Activated CD8-positive, alpha-beta T cell treated with anti-CD3 and anti-CD28 coated beads, Interleukin-2, amount 10 ng/mL, durations not matched to agents 7 days and 5 days (primary cell): ENCODE measurements at regions of chr6 and their contacts with region 1.

Region 1: GRCh38 chr6:107731422-107732319 is 92.4 kb downstream of the SCML4 start:
- DNase-seq: peak; percentile 56
- ATAC-seq: peak; percentile 37
- H3K4me3 Mint-ChIP-seq: peak overlapping the region; percentile 90
- H3K27ac Mint-ChIP-seq: peak overlapping the region; percentile 92
- H3K4me1 Mint-ChIP-seq: peaks cover 83% of the 10 kb centered on the region
- H3K27me3 Mint-ChIP-seq: no peaks in the 10 kb centered on the region

Region 2: DNA sequence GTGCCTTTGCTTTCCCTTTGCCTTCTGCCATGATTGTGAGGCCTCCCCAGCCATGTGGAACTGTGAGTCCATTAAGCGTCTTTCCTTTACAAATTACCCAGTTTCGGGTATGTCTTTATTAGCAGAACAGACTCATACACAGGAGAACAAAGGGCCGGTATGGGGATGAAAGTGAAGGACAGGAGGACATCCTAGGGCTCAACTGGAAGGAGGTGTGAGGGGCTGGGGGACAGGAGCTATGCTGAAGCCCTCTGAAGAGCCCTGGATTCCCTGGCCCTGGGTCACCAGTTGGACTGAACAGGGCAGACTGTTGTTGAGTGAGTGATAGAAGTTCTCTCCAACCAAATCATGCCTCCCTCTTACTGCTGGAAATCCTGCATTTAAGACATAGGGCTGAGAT is 13.3 kb before region 1 on chr6:
- CTCF ChIA-PET with region 1: interaction called, 10 read pairs
- POLR2A ChIA-PET with region 1: interaction called, 5 read pairs
- DNase-seq: no peak
- ATAC-seq: no peak
- H3K4me3 Mint-ChIP-seq: no peak overlapping the region
- H3K27ac Mint-ChIP-seq: no peak overlapping the region
- H3K4me1 Mint-ChIP-seq: peaks cover 63% of the 10 kb centered on the region
- H3K27me3 Mint-ChIP-seq: no peaks in the 10 kb centered on the region

Region 3: DNA sequence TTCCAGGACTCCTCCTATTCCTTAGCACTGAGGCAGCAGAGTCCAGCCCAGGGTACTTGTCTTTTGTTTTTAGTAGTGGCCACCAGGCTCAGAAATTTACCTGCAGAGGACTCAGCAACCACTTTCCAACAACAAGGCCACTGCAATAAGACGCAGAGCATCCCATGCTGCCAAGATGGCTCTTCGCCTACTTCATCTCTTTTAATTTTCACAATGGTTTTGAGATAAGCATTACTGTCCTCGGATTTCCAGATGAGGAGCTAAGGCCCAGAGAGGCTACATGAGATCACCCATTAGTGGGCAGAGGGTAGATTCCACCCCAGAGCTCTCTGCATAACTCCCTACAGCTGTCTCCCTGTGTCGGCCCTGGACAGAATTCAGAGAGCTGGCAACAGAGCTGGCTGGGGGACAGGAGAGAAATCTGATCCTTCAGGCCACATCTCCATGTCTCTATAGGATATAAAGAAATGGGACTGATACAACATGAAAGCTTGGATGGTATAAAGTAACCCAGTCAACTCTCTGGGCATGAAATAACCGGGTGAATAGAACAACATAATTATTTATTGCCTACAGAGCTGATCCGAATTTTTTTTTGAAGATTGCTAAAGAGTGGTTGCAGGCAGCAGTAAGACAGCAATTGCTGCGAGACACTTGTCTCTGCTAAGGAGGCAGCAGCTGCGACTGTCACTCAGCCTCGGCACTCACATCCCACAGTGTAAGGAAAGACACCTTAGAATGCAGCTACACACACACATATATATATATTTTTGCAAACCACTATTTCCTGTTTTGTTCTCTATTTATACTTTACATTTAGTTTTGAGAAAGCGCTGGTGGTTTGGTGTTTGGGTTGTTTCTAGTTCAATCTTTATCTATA is 55.3 kb after region 1 on chr6:
- CTCF ChIA-PET with region 1: interaction called, 18 read pairs
- POLR2A ChIA-PET with region 1: interaction called, 5 read pairs
- DNase-seq: peak; percentile 70
- ATAC-seq: peak; percentile 81
- H3K4me3 Mint-ChIP-seq: peak overlapping the region; percentile 69
- H3K27ac Mint-ChIP-seq: peak overlapping the region; percentile 91
- H3K4me1 Mint-ChIP-seq: peaks cover 67% of the 10 kb centered on the region
- H3K27me3 Mint-ChIP-seq: no peaks in the 10 kb centered on the region

Region 4: GRCh38 chr6:107866606-107867301 is 135.1 kb after region 1 on chr6:
- CTCF ChIA-PET with region 1: interaction called, 62 read pairs
- POLR2A ChIA-PET with region 1: no interaction called
- DNase-seq: peak; percentile 58
- ATAC-seq: peak; percentile 57
- H3K4me3 Mint-ChIP-seq: no peak overlapping the region
- H3K27ac Mint-ChIP-seq: no peak overlapping the region
- H3K4me1 Mint-ChIP-seq: peaks cover 7% of the 10 kb centered on the region
- H3K27me3 Mint-ChIP-seq: no peaks in the 10 kb centered on the region

Region 5: GRCh38 chr6:108105571-108105970 is 373.9 kb after region 1 on chr6:
- CTCF ChIA-PET with region 1: no interaction called
- POLR2A ChIA-PET with region 1: no interaction called
- DNase-seq: no peak
- ATAC-seq: no peak
- H3K4me3 Mint-ChIP-seq: no peak overlapping the region
- H3K27ac Mint-ChIP-seq: no peak overlapping the region
- H3K4me1 Mint-ChIP-seq: no peaks in the 10 kb centered on the region
- H3K27me3 Mint-ChIP-seq: peaks cover 26% of the 10 kb centered on the region